ENCODE measurements at regions of chr6 and their contacts with region 1.

Region 1: GRCh38 chr6:157184202-157185020 is 138.9 kb downstream of the TMEM242 start:
- DNase-seq: peak; percentile 56
- H3K4me3 ChIP-seq: no peak overlapping the region
- H3K27ac ChIP-seq: no peak overlapping the region
- H3K4me1 ChIP-seq: no peaks in the 10 kb centered on the region
- CTCF ChIP-seq: peak; percentile 85

Region 2: GRCh38 chr6:157034436-157035230 is 149.8 kb before region 1 on chr6:
- CTCF ChIA-PET with region 1: no interaction called
- POLR2A ChIA-PET with region 1: no interaction called
- intact Hi-C with region 1: loop called (anchors 1 kb)
- DNase-seq: peak; percentile 68
- H3K4me3 ChIP-seq: no peak overlapping the region
- H3K27ac ChIP-seq: no peak overlapping the region
- H3K4me1 ChIP-seq: peaks cover 27% of the 10 kb centered on the region
- CTCF ChIP-seq: peak; percentile 92

Region 3: DNA sequence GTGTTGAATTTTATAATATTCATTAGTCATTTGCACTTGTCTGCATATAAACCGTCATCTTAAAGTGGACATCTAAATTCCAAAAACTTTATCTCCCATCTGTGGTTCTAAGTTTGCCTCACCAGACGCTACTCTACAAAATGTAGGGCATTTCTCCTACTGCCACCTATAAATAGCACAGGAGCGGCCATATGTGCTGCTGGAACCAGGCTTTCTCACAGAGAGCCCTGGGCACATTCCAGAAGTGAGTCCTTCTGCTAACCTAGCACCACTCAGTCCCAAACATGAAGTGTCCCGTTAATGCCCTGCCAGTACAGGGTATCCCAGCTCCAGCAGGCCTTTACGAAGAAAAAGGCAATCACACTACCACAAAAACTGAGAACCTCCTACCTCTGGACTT is 14.8 kb before region 1 on chr6:
- CTCF ChIA-PET with region 1: no interaction called
- POLR2A ChIA-PET with region 1: no interaction called
- intact Hi-C with region 1: no loop called
- DNase-seq: no peak
- H3K4me3 ChIP-seq: no peak overlapping the region
- H3K27ac ChIP-seq: no peak overlapping the region
- H3K4me1 ChIP-seq: no peaks in the 10 kb centered on the region
- CTCF ChIP-seq: no peak

Region 4: GRCh38 chr6:157194643-157195042 is 10.2 kb after region 1 on chr6:
- CTCF ChIA-PET with region 1: no interaction called
- POLR2A ChIA-PET with region 1: no interaction called
- intact Hi-C with region 1: no loop called
- DNase-seq: no peak
- H3K4me3 ChIP-seq: no peak overlapping the region
- H3K27ac ChIP-seq: no peak overlapping the region
- H3K4me1 ChIP-seq: no peaks in the 10 kb centered on the region
- CTCF ChIP-seq: no peak

Region 5: GRCh38 chr6:157244175-157244574 is 59.8 kb after region 1 on chr6:
- CTCF ChIA-PET with region 1: no interaction called
- POLR2A ChIA-PET with region 1: no interaction called
- intact Hi-C with region 1: no loop called
- DNase-seq: no peak
- H3K4me3 ChIP-seq: no peak overlapping the region
- H3K27ac ChIP-seq: no peak overlapping the region
- H3K4me1 ChIP-seq: no peaks in the 10 kb centered on the region
- CTCF ChIP-seq: no peak

Region 6: GRCh38 chr6:157912326-157912725 is 727.9 kb after region 1 on chr6:
- CTCF ChIA-PET with region 1: no interaction called
- POLR2A ChIA-PET with region 1: interaction called, 10 read pairs
- intact Hi-C with region 1: no loop called
- DNase-seq: no peak
- H3K4me3 ChIP-seq: no peak overlapping the region
- H3K27ac ChIP-seq: no peak overlapping the region
- H3K4me1 ChIP-seq: peaks cover 8% of the 10 kb centered on the region
- CTCF ChIP-seq: no peak